ENCODE measurements at regions of chr13 and their contacts with region 1.

Region 1: GRCh38 chr13:27770809-27771208 is 21.5 kb upstream of the GSX1 start:
- DNase-seq: peak; percentile 55
- ATAC-seq: no peak
- H3K4me3 Mint-ChIP-seq: no peak overlapping the region
- H3K27ac Mint-ChIP-seq: no peak overlapping the region
- H3K4me1 Mint-ChIP-seq: no peaks in the 10 kb centered on the region
- H3K27me3 Mint-ChIP-seq: peaks cover 12% of the 10 kb centered on the region

Region 2: GRCh38 chr13:27783111-27783510 is 12.3 kb after region 1 on chr13:
- CTCF ChIA-PET with region 1: interaction called, 11 read pairs
- POLR2A ChIA-PET with region 1: no interaction called
- DNase-seq: no peak
- ATAC-seq: no peak
- H3K4me3 Mint-ChIP-seq: no peak overlapping the region
- H3K27ac Mint-ChIP-seq: no peak overlapping the region
- H3K4me1 Mint-ChIP-seq: no peaks in the 10 kb centered on the region
- H3K27me3 Mint-ChIP-seq: peaks cover 46% of the 10 kb centered on the region

Measured in activated CD8-positive, alpha-beta T cell treated with anti-CD3 and anti-CD28 coated beads, Interleukin-2, amount 10 ng/mL, durations not matched to agents 7 days and 5 days (primary cell).